Ascending aorta (tissue), 2 donors: ENCODE measurements at regions of chr6 and their contacts with region 1.

Region 1: GRCh38 chr6:128725271-128726233 is 157.4 kb upstream of the LAMA2 start:
- DNase-seq: no peak
- H3K4me3 ChIP-seq: no peak overlapping the region
- H3K27ac ChIP-seq: no peak overlapping the region
- H3K4me1 ChIP-seq: no peaks in the 10 kb centered on the region
- H3K27me3 ChIP-seq: no peaks in the 10 kb centered on the region
- CTCF ChIP-seq: peak; percentile 20 to 51 (median 44)

Region 2: GRCh38 chr6:128554302-128554701 is 171.2 kb before region 1 on chr6:
- intact Hi-C with region 1: no loop called
- DNase-seq: no peak
- H3K4me3 ChIP-seq: no peak overlapping the region
- H3K27ac ChIP-seq: no peak overlapping the region
- H3K4me1 ChIP-seq: no peaks in the 10 kb centered on the region
- H3K27me3 ChIP-seq: no peaks in the 10 kb centered on the region
- CTCF ChIP-seq: peak in 1 of 3 experiments; percentile 25

Region 3: DNA sequence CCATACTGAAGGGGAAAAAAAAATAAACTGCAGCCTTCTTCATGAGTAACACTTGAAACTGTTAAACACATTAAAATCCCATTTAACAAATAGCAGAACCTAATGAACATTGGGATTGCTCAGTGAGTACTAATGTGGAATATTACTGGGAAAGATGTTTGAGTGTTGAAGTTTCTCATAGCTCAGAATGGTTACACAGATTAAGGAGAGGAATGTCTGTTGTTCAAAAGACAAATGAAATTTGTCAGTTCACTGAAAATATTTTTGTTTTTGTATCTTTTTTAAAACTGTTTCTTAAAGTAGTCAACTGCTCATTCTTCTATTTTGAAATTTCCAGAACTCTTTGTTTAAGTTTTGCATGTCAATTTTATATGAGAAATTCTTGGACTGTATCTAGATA is 531.6 kb after region 1 on chr6:
- intact Hi-C with region 1: loop called (anchors 5 kb)
- DNase-seq: no peak
- H3K4me3 ChIP-seq: no peak overlapping the region
- H3K27ac ChIP-seq: no peak overlapping the region
- H3K4me1 ChIP-seq: no peaks in the 10 kb centered on the region
- H3K27me3 ChIP-seq: no peaks in the 10 kb centered on the region
- CTCF ChIP-seq: no peak

Region 4: GRCh38 chr6:129370268-129370916 is 644.8 kb after region 1 on chr6:
- intact Hi-C with region 1: loop called (anchors 10 kb)
- DNase-seq: no peak
- H3K4me3 ChIP-seq: peak overlapping the region in 1 of 2 donors; percentile 31
- H3K27ac ChIP-seq: no peak overlapping the region
- H3K4me1 ChIP-seq: no peaks in the 10 kb centered on the region
- H3K27me3 ChIP-seq: no peaks in the 10 kb centered on the region
- CTCF ChIP-seq: peak in 2 of 3 experiments; percentile 40 to 59